Ovary (tissue), 10 donors: ENCODE measurements at regions of chr10 and their contacts with region 1.

Region 1: GRCh38 chr10:29452546-29452945 is 163.7 kb downstream of the LYZL1 start:
- DNase-seq: no peak
- H3K4me3 ChIP-seq: no peak overlapping the region
- H3K27ac ChIP-seq: no peak overlapping the region
- H3K4me1 ChIP-seq: no peaks in the 10 kb centered on the region
- H3K27me3 ChIP-seq: no peaks in the 10 kb centered on the region
- CTCF ChIP-seq: no peak
- EP300 ChIP-seq: no peak
- POLR2A ChIP-seq: no peak

Region 2: DNA sequence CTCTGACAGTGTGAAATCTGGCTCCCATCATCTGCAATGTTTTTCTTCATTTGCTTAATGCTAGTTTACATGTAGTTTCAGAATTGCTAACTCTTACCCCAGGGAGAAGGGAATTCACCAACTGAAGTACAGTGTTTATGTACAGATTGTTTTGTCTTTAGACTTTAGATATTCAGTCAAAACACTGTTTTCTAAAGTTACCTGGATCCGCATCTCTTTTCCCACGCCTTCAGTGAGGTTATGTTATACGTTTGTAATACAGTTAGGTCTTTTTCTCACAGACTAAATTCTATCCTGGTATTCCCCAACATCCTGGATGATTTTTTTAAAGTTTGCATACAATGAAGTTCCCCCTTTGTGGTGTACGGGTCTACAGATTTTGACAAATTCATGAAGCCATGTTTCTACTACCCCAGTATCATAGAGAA is 166.9 kb before region 1 on chr10:
- intact Hi-C with region 1: no loop called
- DNase-seq: no peak
- H3K4me3 ChIP-seq: no peak overlapping the region
- H3K27ac ChIP-seq: no peak overlapping the region
- H3K4me1 ChIP-seq: no peaks in the 10 kb centered on the region
- H3K27me3 ChIP-seq: no peaks in the 10 kb centered on the region
- CTCF ChIP-seq: no peak
- EP300 ChIP-seq: no peak
- POLR2A ChIP-seq: no peak

Region 3: GRCh38 chr10:29377333-29377961 is 75.1 kb before region 1 on chr10:
- intact Hi-C with region 1: loop called in 1 of 4 experiments (anchors 5 kb)
- DNase-seq: no peak
- H3K4me3 ChIP-seq: no peak overlapping the region
- H3K27ac ChIP-seq: no peak overlapping the region
- H3K4me1 ChIP-seq: no peaks in the 10 kb centered on the region
- H3K27me3 ChIP-seq: no peaks in the 10 kb centered on the region
- CTCF ChIP-seq: peak; percentile 62 to 79 (median 74)
- EP300 ChIP-seq: no peak
- POLR2A ChIP-seq: no peak

Region 4: GRCh38 chr10:29473407-29474100 is 21.0 kb after region 1 on chr10:
- intact Hi-C with region 1: loop called in 1 of 4 experiments (anchors 2 kb)
- DNase-seq: no peak
- H3K4me3 ChIP-seq: no peak overlapping the region
- H3K27ac ChIP-seq: peak overlapping the region in 1 of 2 donors; percentile 16
- H3K4me1 ChIP-seq: peaks cover 9% of the 10 kb centered on the region
- H3K27me3 ChIP-seq: no peaks in the 10 kb centered on the region
- CTCF ChIP-seq: no peak
- EP300 ChIP-seq: no peak
- POLR2A ChIP-seq: no peak

Region 5: GRCh38 chr10:29496341-29497162 is 44.0 kb after region 1 on chr10:
- intact Hi-C with region 1: no loop called
- DNase-seq: peak; percentile 80 to 91 (median 87)
- H3K4me3 ChIP-seq: no peak overlapping the region
- H3K27ac ChIP-seq: no peak overlapping the region
- H3K4me1 ChIP-seq: peaks cover 2% of the 10 kb centered on the region
- H3K27me3 ChIP-seq: no peaks in the 10 kb centered on the region
- CTCF ChIP-seq: peak; percentile 69 to 87 (median 87)
- EP300 ChIP-seq: no peak
- POLR2A ChIP-seq: no peak

Region 6: GRCh38 chr10:29576681-29577080 is 124.1 kb after region 1 on chr10:
- intact Hi-C with region 1: no loop called
- DNase-seq: no peak
- H3K4me3 ChIP-seq: no peak overlapping the region
- H3K27ac ChIP-seq: no peak overlapping the region
- H3K4me1 ChIP-seq: no peaks in the 10 kb centered on the region
- H3K27me3 ChIP-seq: no peaks in the 10 kb centered on the region
- CTCF ChIP-seq: no peak
- EP300 ChIP-seq: no peak
- POLR2A ChIP-seq: no peak